Caco-2 (cell line): ENCODE measurements at regions of chr7 and their contacts with region 1.

Region 1: DNA sequence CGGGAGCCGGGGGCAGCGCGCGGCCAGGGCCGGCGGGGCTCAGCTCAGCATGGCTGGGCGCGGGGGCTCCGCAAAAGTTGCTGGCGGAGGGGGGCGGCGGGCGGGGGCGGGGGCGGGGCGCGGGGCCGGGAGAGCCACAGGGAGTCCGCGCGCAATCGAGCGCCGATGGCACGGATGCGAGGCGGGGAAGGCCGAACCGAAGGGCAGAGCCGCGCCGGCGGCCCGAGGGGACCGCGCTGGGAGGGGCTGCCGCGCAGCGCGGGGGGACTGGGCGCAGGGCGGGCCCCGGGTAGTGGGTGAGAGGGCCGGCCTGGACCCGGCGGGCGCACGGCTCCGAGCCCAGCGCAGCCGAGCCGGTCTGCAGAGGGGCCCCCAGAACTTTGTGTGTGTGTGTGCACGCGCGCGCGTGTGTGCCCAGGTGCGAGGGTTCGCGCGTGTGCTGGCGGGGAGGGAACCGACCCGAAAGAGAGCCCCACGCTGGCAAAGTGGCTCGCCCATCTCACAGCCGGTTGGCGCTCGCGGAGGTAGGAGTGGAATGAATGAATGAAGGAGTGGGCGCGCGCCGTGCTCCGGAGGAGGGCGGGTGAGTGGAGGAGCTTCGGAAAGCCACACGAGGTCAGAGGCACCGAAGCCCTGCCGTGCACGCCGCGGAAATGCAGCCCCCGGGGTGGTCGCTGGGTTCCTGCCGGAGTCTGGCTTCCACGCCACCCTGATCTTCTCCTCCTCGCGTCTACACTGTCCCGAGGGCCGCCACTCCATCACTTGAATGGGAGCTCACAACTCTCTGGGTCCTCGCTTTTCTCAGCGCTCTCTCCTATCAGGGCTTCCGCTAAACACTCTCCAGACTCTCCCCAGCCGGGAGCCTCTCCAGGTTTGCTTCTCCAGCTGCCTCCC is at the start of gene HIPK2:
- DNase-seq: peak; percentile 72 to 84
- H3K4me3 ChIP-seq: peak within 1 kb of the TSS; percentile 80
- H3K4me3 Mint-ChIP-seq: peak within 1 kb of the TSS; percentile 94
- H3K27ac Mint-ChIP-seq: peak within 1 kb of the TSS; percentile 75
- H3K4me1 ChIP-seq: no peaks in the 10 kb centered on the region; the same call in 1 of the 2 replicates
- H3K4me1 Mint-ChIP-seq: peaks cover 7% of the 10 kb centered on the region
- H3K27me3 ChIP-seq: no peaks in the 10 kb centered on the region
- H3K27me3 Mint-ChIP-seq: peaks cover 4% of the 10 kb centered on the region
- CTCF ChIP-seq: no peak
- total RNA-seq, gene HIPK2: 35.6 and 42.8 TPM in 2 replicates

Region 2: GRCh38 chr7:139680676-139681462 is 97.3 kb before region 1 on chr7:
- CTCF ChIA-PET with region 1: no interaction called
- POLR2A ChIA-PET with region 1: interaction called, 4 read pairs
- intact Hi-C with region 1: loop called (anchors 2 kb)
- DNase-seq: no peak
- H3K4me3 ChIP-seq: no peak overlapping the region
- H3K4me3 Mint-ChIP-seq: peak overlapping the region; percentile 69
- H3K27ac Mint-ChIP-seq: peak overlapping the region; percentile 98
- H3K4me1 ChIP-seq: peaks cover 66% of the 10 kb centered on the region
- H3K4me1 Mint-ChIP-seq: peaks cover 47% of the 10 kb centered on the region
- H3K27me3 ChIP-seq: no peaks in the 10 kb centered on the region
- H3K27me3 Mint-ChIP-seq: no peaks in the 10 kb centered on the region
- CTCF ChIP-seq: no peak

Region 3: GRCh38 chr7:139708541-139708940 is 69.7 kb before region 1 on chr7:
- CTCF ChIA-PET with region 1: no interaction called
- POLR2A ChIA-PET with region 1: no interaction called
- intact Hi-C with region 1: no loop called
- DNase-seq: no peak
- H3K4me3 ChIP-seq: no peak overlapping the region
- H3K4me3 Mint-ChIP-seq: no peak overlapping the region
- H3K27ac Mint-ChIP-seq: no peak overlapping the region
- H3K4me1 ChIP-seq: no peaks in the 10 kb centered on the region
- H3K4me1 Mint-ChIP-seq: no peaks in the 10 kb centered on the region
- H3K27me3 ChIP-seq: no peaks in the 10 kb centered on the region
- H3K27me3 Mint-ChIP-seq: no peaks in the 10 kb centered on the region
- CTCF ChIP-seq: no peak

Region 4: DNA sequence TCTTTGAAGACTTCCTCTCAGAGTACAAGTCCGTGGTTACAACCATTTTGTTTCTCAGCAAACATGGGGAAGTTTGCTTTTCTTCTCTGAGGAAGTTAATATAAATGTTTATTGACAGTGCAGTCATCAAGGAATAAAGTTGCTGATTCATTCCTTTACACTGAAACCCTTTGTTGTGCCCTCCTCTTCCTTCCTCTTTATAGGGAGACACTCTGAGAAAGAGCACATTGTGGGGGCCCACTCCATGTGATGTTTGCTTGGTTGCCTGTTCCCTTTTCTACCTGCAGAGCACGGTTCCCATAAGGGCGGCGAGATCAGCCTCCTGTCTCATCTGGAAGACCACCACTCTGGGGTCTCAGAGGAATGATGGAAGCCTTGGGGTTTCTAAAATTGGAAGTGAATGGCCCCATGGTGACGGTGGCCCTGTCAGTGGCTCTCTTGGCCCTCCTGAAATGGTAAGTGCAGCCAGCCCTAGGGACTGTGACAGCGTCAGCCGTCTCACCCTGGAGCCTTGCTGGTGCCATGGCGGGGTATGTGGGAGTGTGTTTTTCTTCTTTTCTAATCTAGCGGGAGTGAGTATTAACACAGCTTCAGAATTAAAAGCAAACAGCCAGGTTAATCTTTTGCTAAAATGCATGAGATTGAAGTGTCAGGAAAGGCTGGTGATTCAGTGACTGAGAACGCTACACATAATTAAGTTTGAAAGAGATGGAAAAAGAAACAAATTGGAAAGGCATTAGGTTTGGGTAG is 51.0 kb after region 1 on chr7 and contains the start of gene TBXAS1:
- CTCF ChIA-PET with region 1: no interaction called
- POLR2A ChIA-PET with region 1: no interaction called
- intact Hi-C with region 1: loop called (anchors 5 kb)
- DNase-seq: peak in 1 of 2 experiments; percentile 19
- H3K4me3 ChIP-seq: no peak within 1 kb of the TSS
- H3K4me3 Mint-ChIP-seq: no peak within 1 kb of the TSS
- H3K27ac Mint-ChIP-seq: no peak within 1 kb of the TSS
- H3K4me1 ChIP-seq: no peaks in the 10 kb centered on the region; the same call in 1 of the 2 replicates
- H3K4me1 Mint-ChIP-seq: peaks cover 8% of the 10 kb centered on the region
- H3K27me3 ChIP-seq: no peaks in the 10 kb centered on the region
- H3K27me3 Mint-ChIP-seq: peaks cover 5% of the 10 kb centered on the region
- CTCF ChIP-seq: no peak
- total RNA-seq, gene TBXAS1: 1.2 and 1.6 TPM in 2 replicates